ENCODE measurements at regions of chr4 and their contacts with region 1.

Region 1: GRCh38 chr4:119212234-119212963 is at the start of gene USP53:
- DNase-seq: peak; percentile 98
- H3K4me3 Mint-ChIP-seq: peak within 1 kb of the TSS; percentile 84
- H3K27ac Mint-ChIP-seq: peak within 1 kb of the TSS; percentile 94
- H3K4me1 Mint-ChIP-seq: peaks cover 29% of the 10 kb centered on the region
- H3K27me3 Mint-ChIP-seq: no peaks in the 10 kb centered on the region
- CTCF ChIP-seq: no peak
- total RNA-seq, gene USP53: 47.4 and 68.0 TPM in 2 replicates

Region 2: DNA sequence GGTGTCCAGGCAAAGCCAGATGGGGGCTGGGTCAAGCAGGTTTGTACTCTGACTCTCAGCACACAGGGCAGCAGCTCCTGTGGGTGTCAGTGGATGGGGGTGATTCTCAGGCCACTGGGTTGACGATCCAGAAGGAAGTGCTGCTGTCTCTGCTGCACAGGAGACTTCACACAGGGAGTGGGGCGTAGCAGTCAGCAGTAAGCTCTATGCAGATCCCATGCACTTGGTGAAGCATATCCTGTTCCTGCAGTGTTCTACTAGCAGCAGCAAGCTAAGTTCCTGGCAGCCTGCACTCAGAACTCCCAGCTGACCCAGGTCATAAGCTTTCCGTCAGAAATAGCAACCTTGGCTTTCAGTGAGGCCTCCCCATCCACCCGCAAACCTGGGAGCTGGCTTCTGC is 1295.7 kb before region 1 on chr4:
- CTCF ChIA-PET with region 1: no interaction called
- POLR2A ChIA-PET with region 1: no interaction called
- intact Hi-C with region 1: no loop called
- DNase-seq: no peak
- H3K4me3 Mint-ChIP-seq: no peak overlapping the region
- H3K27ac Mint-ChIP-seq: no peak overlapping the region
- H3K4me1 Mint-ChIP-seq: no peaks in the 10 kb centered on the region
- H3K27me3 Mint-ChIP-seq: no peaks in the 10 kb centered on the region
- CTCF ChIP-seq: no peak

Region 3: DNA sequence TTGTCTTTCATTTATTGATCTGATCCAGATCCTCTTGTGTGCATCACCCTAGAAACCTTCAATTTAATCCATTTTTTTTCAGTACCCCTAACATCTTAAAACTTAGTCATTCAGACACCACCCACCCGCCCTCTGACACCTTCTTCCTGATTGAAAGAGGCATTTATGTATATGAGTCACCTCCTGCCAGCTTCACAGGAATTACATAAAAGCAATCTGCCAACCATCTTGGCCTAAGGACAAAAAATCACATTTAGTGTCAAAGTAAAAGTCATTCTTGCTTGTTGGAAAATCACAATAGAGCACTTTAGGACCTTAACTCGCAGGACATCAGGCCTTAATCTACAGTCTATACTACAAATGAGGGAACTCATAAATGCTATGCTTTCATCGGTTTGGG is 1126.1 kb before region 1 on chr4:
- CTCF ChIA-PET with region 1: no interaction called
- POLR2A ChIA-PET with region 1: no interaction called
- intact Hi-C with region 1: no loop called
- DNase-seq: peak; percentile 80
- H3K4me3 Mint-ChIP-seq: no peak overlapping the region
- H3K27ac Mint-ChIP-seq: no peak overlapping the region
- H3K4me1 Mint-ChIP-seq: peaks cover 9% of the 10 kb centered on the region
- H3K27me3 Mint-ChIP-seq: no peaks in the 10 kb centered on the region
- CTCF ChIP-seq: no peak

Region 4: DNA sequence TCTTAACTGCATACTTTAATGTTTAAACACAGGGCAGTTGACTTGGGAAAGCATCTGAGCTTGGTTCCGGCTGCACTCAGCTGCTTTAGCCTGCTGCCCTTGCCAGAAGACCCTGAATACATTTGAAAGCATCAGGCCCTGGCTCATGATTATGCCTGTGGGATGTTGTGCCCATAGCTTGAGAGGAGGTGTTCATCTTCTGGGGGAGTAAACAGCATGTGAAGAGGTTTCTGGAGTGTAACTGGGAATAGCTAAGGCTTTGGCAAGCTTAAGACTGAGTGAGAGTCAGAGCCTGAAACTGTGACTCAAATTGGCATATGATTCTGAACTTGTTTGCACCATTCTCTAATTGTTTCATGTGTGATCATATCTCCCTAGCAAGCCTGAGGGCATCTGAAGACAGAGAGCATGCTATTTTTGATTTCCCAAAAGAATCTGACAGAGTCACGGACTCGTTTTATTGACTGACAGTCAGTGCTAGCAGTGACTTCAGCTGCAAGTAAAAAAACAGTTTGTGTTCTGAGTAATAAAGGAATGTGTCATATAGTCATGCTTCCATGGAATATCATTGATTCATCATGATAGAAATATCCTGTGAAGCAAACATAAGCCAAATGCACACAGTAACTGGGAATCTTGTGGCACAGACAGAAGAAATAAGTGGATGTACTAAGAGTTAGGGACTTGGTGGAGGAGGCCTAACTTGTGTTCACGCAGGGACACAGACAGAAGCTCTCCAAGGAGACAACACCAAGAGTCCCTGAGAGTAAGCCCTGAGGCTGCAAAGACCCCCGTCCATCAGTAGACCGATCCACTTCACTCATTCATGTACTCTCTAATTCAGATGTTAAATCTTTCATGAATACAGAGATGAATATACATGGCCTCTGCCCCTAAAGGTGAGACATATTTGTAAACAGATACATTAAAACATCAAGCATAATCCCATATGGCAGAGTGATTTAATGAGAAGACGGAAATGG is 223.0 kb before region 1 on chr4:
- CTCF ChIA-PET with region 1: interaction called, 12 read pairs
- POLR2A ChIA-PET with region 1: interaction called, 73 read pairs
- intact Hi-C with region 1: loop called (anchors 2 kb)
- DNase-seq: peak; percentile 91
- H3K4me3 Mint-ChIP-seq: peak overlapping the region; percentile 23
- H3K27ac Mint-ChIP-seq: peak overlapping the region; percentile 96
- H3K4me1 Mint-ChIP-seq: peaks cover 25% of the 10 kb centered on the region
- H3K27me3 Mint-ChIP-seq: no peaks in the 10 kb centered on the region
- CTCF ChIP-seq: no peak

Region 5: GRCh38 chr4:119068529-119068962 is 143.9 kb before region 1 on chr4:
- CTCF ChIA-PET with region 1: interaction called, 4 read pairs
- POLR2A ChIA-PET with region 1: interaction called, 25 read pairs
- intact Hi-C with region 1: no loop called
- DNase-seq: peak; percentile 63
- H3K4me3 Mint-ChIP-seq: no peak overlapping the region
- H3K27ac Mint-ChIP-seq: peak overlapping the region; percentile 72
- H3K4me1 Mint-ChIP-seq: peaks cover 25% of the 10 kb centered on the region
- H3K27me3 Mint-ChIP-seq: no peaks in the 10 kb centered on the region
- CTCF ChIP-seq: no peak

Region 6: GRCh38 chr4:119113033-119113655 is 99.3 kb before region 1 on chr4:
- CTCF ChIA-PET with region 1: interaction called, 6 read pairs
- POLR2A ChIA-PET with region 1: interaction called, 23 read pairs
- intact Hi-C with region 1: no loop called
- DNase-seq: peak; percentile 88
- H3K4me3 Mint-ChIP-seq: no peak overlapping the region
- H3K27ac Mint-ChIP-seq: peak overlapping the region; percentile 74
- H3K4me1 Mint-ChIP-seq: peaks cover 5% of the 10 kb centered on the region
- H3K27me3 Mint-ChIP-seq: no peaks in the 10 kb centered on the region
- CTCF ChIP-seq: no peak

Region 7: DNA sequence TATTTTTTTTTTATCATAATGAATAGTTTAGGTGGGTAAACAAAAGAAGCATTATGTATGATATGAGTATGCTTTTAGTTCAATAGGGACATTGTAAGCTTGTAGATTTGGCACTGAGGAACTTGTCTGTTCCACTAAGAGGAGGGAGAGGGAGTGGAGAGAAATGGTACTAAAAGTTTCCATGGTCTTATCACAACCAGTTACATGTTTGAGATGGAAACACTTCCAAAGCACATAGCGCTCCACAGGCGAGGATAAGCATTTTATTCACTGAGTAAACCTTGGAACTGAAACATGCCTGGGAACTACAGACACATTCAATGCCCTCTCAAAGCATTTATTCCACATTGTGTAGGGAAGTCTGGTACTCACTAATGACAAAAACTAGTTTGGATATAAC is 61.2 kb before region 1 on chr4:
- CTCF ChIA-PET with region 1: no interaction called
- POLR2A ChIA-PET with region 1: no interaction called
- intact Hi-C with region 1: no loop called
- DNase-seq: no peak
- H3K4me3 Mint-ChIP-seq: no peak overlapping the region
- H3K27ac Mint-ChIP-seq: no peak overlapping the region
- H3K4me1 Mint-ChIP-seq: no peaks in the 10 kb centered on the region
- H3K27me3 Mint-ChIP-seq: no peaks in the 10 kb centered on the region
- CTCF ChIP-seq: no peak

Region 8: GRCh38 chr4:119268451-119268850 is 56.1 kb after region 1 on chr4:
- CTCF ChIA-PET with region 1: interaction called, 3 read pairs
- POLR2A ChIA-PET with region 1: interaction called, 10 read pairs
- intact Hi-C with region 1: no loop called
- DNase-seq: peak; percentile 31
- H3K4me3 Mint-ChIP-seq: no peak overlapping the region
- H3K27ac Mint-ChIP-seq: no peak overlapping the region
- H3K4me1 Mint-ChIP-seq: peaks cover 6% of the 10 kb centered on the region
- H3K27me3 Mint-ChIP-seq: no peaks in the 10 kb centered on the region
- CTCF ChIP-seq: no peak

Measured in MCF 10A (cell line).